WTC11 (cell line): ENCODE measurements at regions of chr12 and their contacts with region 1.

Region 1: GRCh38 chr12:51025836-51026638 is at the start of gene SLC11A2:
- DNase-seq: peak; percentile 97
- ATAC-seq: peak; percentile 94
- H3K4me3 Mint-ChIP-seq: peak within 1 kb of the TSS; percentile 87
- H3K27ac Mint-ChIP-seq: peak within 1 kb of the TSS; percentile 93
- H3K4me1 Mint-ChIP-seq: peaks cover 47% of the 10 kb centered on the region
- H3K27me3 Mint-ChIP-seq: no peaks in the 10 kb centered on the region
- CTCF ChIP-seq: no peak
- total RNA-seq, gene SLC11A2: 48.6 to 58.0 TPM (median 54.6 TPM) in 3 replicates

Region 2: GRCh38 chr12:50690925-50691324 is 335.1 kb before region 1 on chr12:
- CTCF ChIA-PET with region 1: no interaction called
- POLR2A ChIA-PET with region 1: no interaction called
- DNase-seq: no peak
- ATAC-seq: no peak
- H3K4me3 Mint-ChIP-seq: no peak overlapping the region
- H3K27ac Mint-ChIP-seq: no peak overlapping the region
- H3K4me1 Mint-ChIP-seq: no peaks in the 10 kb centered on the region
- H3K27me3 Mint-ChIP-seq: no peaks in the 10 kb centered on the region
- CTCF ChIP-seq: no peak

Region 3: DNA sequence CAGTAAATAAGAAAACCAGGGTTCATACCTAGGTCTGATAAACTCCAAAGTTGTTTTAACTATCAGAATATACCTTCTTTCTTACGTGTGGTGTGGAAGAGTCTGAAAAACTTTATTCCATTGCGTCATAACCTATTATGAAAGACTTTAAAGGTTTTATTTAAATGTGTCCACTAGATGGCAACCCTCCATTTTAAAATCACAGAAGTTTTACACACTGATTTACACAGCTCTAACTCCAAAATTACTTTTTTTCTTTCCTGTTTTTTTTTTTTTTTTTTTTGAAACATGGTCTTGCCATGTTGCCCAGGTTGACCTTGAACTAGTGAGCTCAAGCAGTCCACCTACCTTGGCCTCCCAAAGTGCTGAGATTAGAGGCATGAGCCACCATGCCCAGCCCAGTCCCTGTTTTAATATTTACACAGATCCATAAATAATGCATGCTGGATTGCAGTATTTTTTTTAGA is 200.6 kb before region 1 on chr12:
- CTCF ChIA-PET with region 1: interaction called, 23 read pairs
- POLR2A ChIA-PET with region 1: no interaction called
- DNase-seq: no peak
- ATAC-seq: no peak; the same call in 1 of the 2 replicates
- H3K4me3 Mint-ChIP-seq: no peak overlapping the region
- H3K27ac Mint-ChIP-seq: no peak overlapping the region
- H3K4me1 Mint-ChIP-seq: no peaks in the 10 kb centered on the region
- H3K27me3 Mint-ChIP-seq: no peaks in the 10 kb centered on the region
- CTCF ChIP-seq: peak; percentile 34

Region 4: GRCh38 chr12:51009056-51009440 is 17.0 kb before region 1 on chr12:
- CTCF ChIA-PET with region 1: interaction called, 30 read pairs
- POLR2A ChIA-PET with region 1: interaction called, 7 read pairs
- DNase-seq: no peak
- ATAC-seq: peak; percentile 17; the same call in 1 of the 2 replicates
- H3K4me3 Mint-ChIP-seq: no peak overlapping the region; the same call in 1 of the 2 replicates
- H3K27ac Mint-ChIP-seq: peak overlapping the region; percentile 48
- H3K4me1 Mint-ChIP-seq: peaks cover 46% of the 10 kb centered on the region
- H3K27me3 Mint-ChIP-seq: no peaks in the 10 kb centered on the region
- CTCF ChIP-seq: no peak